ENCODE measurements at regions of chr15 and their contacts with region 1.

Region 1: GRCh38 chr15:26916785-26917184 is 49.9 kb downstream of the GABRA5 start:
- DNase-seq: no peak
- H3K4me3 ChIP-seq: no peak overlapping the region
- H3K27ac ChIP-seq: no peak overlapping the region
- H3K4me1 ChIP-seq: no peaks in the 10 kb centered on the region
- H3K27me3 ChIP-seq: no peaks in the 10 kb centered on the region
- CTCF ChIP-seq: no peak

Region 2: GRCh38 chr15:26665957-26666791 is 250.6 kb before region 1 on chr15:
- intact Hi-C with region 1: no loop called
- DNase-seq: no peak
- H3K4me3 ChIP-seq: no peak overlapping the region
- H3K27ac ChIP-seq: no peak overlapping the region
- H3K4me1 ChIP-seq: no peaks in the 10 kb centered on the region
- H3K27me3 ChIP-seq: no peaks in the 10 kb centered on the region
- CTCF ChIP-seq: no peak

Region 3: DNA sequence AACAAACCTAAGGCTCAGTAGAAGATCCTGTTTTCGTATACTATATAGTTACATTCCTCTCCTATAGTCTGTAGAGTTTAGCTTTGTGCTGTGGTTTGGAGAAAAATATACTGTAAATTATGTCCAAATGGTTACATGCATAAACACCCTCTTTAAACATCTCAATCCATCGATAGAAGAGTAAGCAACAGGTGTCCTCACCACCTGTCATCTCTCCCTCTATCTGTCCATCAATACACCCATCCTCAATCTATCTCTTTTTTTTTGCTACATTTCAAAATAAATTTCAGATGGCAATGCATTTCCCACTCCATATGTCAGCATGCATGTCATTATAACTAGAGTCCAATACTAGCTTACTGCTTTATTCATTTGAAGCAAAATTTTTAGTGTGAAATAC is 33.2 kb after region 1 on chr15:
- intact Hi-C with region 1: loop called (anchors 5 kb)
- DNase-seq: no peak
- H3K4me3 ChIP-seq: no peak overlapping the region
- H3K27ac ChIP-seq: no peak overlapping the region
- H3K4me1 ChIP-seq: no peaks in the 10 kb centered on the region
- H3K27me3 ChIP-seq: no peaks in the 10 kb centered on the region
- CTCF ChIP-seq: no peak

Region 4: DNA sequence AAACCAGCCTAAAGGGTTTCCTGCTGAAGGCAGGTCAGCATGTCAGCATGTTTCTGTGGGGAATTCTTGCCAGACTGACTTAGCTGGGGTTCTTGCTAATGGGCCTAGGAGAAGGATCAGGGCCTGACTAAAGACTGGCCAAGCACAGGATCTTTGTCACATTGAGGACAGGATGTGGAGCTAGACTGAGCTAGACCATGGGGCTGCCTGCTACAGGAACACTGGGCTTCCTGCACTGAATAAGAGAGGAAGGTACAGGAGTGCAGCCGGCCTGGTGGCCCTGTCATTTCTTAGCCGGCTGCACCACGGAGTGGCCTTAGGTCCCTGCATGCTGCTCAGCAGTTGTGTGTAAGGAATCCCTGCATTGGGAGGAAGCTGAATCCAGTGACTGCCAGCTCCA is 122.4 kb after region 1 on chr15:
- intact Hi-C with region 1: no loop called
- DNase-seq: no peak
- H3K4me3 ChIP-seq: no peak overlapping the region
- H3K27ac ChIP-seq: no peak overlapping the region
- H3K4me1 ChIP-seq: no peaks in the 10 kb centered on the region
- H3K27me3 ChIP-seq: no peaks in the 10 kb centered on the region
- CTCF ChIP-seq: no peak

Measured in colonic mucosa (tissue), 4 donors.